Endothelial cell of umbilical vein (primary cell): ENCODE measurements at regions of chr9 and their contacts with region 1.

Region 1: GRCh38 chr9:125407974-125408900 is 146.6 kb downstream of the GAPVD1 start:
- DNase-seq: peak; percentile 61
- H3K4me3 ChIP-seq: peak overlapping the region; percentile 39 to 62 (median 40)
- H3K27ac ChIP-seq: peak overlapping the region; percentile 66
- H3K4me1 ChIP-seq: peaks cover 3% of the 10 kb centered on the region
- H3K27me3 ChIP-seq: no peaks in the 10 kb centered on the region
- CTCF ChIP-seq: peak; percentile 82 to 93
- POLR2A ChIP-seq: no peak

Region 2: GRCh38 chr9:124593651-124594058 is 814.6 kb before region 1 on chr9:
- CTCF ChIA-PET with region 1: no interaction called
- POLR2A ChIA-PET with region 1: no interaction called
- dilution Hi-C with region 1: no loop called
- intact Hi-C with region 1: no loop called
- DNase-seq: no peak
- H3K4me3 ChIP-seq: no peak overlapping the region
- H3K27ac ChIP-seq: no peak overlapping the region
- H3K4me1 ChIP-seq: no peaks in the 10 kb centered on the region
- H3K27me3 ChIP-seq: peaks cover 32% of the 10 kb centered on the region in 2 experiments
- CTCF ChIP-seq: no peak
- POLR2A ChIP-seq: no peak

Region 3: GRCh38 chr9:125549891-125550885 is 142.0 kb after region 1 on chr9:
- CTCF ChIA-PET with region 1: interaction called, 18 read pairs
- POLR2A ChIA-PET with region 1: no interaction called
- dilution Hi-C with region 1: no loop called
- intact Hi-C with region 1: no loop called
- DNase-seq: peak; percentile 80
- H3K4me3 ChIP-seq: peak overlapping the region in 1 of 3 experiments; percentile 19
- H3K27ac ChIP-seq: peak overlapping the region; percentile 72
- H3K4me1 ChIP-seq: peaks cover 43% of the 10 kb centered on the region
- H3K27me3 ChIP-seq: no peaks in the 10 kb centered on the region
- CTCF ChIP-seq: no peak
- POLR2A ChIP-seq: no peak

Region 4: GRCh38 chr9:125631391-125632085 is 223.3 kb after region 1 on chr9:
- CTCF ChIA-PET with region 1: interaction called, 11 read pairs
- POLR2A ChIA-PET with region 1: no interaction called
- dilution Hi-C with region 1: no loop called
- intact Hi-C with region 1: loop called (anchors 1 kb)
- DNase-seq: peak; percentile 73
- H3K4me3 ChIP-seq: no peak overlapping the region
- H3K27ac ChIP-seq: peak overlapping the region; percentile 32
- H3K4me1 ChIP-seq: peaks cover 29% of the 10 kb centered on the region
- H3K27me3 ChIP-seq: no peaks in the 10 kb centered on the region
- CTCF ChIP-seq: peak; percentile 62 to 65
- POLR2A ChIP-seq: no peak

Region 5: DNA sequence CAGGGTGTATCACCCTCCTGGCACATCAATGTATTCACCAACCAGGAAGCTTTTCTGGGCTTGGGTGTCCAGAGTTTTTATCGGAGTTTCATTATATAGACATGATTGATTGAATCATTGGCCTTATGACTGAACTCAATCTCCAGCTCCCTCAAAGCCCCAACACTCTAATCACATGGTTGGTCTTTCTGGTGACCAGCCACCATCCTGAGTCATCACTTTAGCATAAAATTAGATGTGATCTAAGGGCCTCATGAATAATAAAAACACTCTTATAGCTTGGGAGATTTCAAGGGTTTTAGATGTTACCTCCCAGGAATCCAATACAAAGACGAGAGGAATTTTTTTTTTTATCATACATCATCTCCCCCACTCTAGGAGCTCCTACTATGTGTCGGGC is 331.2 kb after region 1 on chr9:
- CTCF ChIA-PET with region 1: no interaction called
- POLR2A ChIA-PET with region 1: no interaction called
- dilution Hi-C with region 1: no loop called
- intact Hi-C with region 1: no loop called
- DNase-seq: no peak
- H3K4me3 ChIP-seq: no peak overlapping the region
- H3K27ac ChIP-seq: no peak overlapping the region
- H3K4me1 ChIP-seq: no peaks in the 10 kb centered on the region
- H3K27me3 ChIP-seq: peaks cover 3 to 5% of the 10 kb centered on the region in 2 experiments
- CTCF ChIP-seq: no peak
- POLR2A ChIP-seq: no peak

Region 6: DNA sequence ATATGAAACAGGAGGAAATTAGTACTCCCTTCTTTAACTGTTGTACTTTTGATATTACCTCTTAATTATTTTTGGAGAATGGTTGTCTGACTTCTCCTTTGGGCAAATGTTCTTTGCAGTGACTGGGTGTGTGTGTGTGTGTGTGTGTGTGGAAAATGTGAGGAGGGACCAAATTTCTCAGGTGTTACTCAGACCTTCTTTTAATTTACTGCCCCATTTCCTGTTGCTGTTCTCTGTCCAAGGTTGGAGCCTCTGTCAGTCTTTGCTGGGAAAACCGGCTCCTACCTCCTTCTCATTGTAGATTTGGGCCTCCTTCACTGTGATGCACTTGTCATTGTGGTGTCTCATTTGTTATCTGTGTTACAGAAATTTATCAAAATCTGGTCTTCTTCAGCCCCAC is 407.3 kb after region 1 on chr9:
- CTCF ChIA-PET with region 1: no interaction called
- POLR2A ChIA-PET with region 1: no interaction called
- dilution Hi-C with region 1: no loop called
- intact Hi-C with region 1: loop called (anchors 1 kb)
- DNase-seq: no peak
- H3K4me3 ChIP-seq: no peak overlapping the region
- H3K27ac ChIP-seq: no peak overlapping the region
- H3K4me1 ChIP-seq: peaks cover 8% of the 10 kb centered on the region
- H3K27me3 ChIP-seq: no peaks in the 10 kb centered on the region
- CTCF ChIP-seq: no peak
- POLR2A ChIP-seq: no peak

Region 7: GRCh38 chr9:126228781-126229444 is 820.7 kb after region 1 on chr9:
- CTCF ChIA-PET with region 1: interaction called, 35 read pairs
- POLR2A ChIA-PET with region 1: no interaction called
- dilution Hi-C with region 1: no loop called
- intact Hi-C with region 1: loop called (anchors 1 kb)
- DNase-seq: peak; percentile 60
- H3K4me3 ChIP-seq: no peak overlapping the region
- H3K27ac ChIP-seq: no peak overlapping the region
- H3K4me1 ChIP-seq: no peaks in the 10 kb centered on the region
- H3K27me3 ChIP-seq: peaks cover 2 to 5% of the 10 kb centered on the region in 2 experiments
- CTCF ChIP-seq: peak; percentile 83 to 95
- POLR2A ChIP-seq: no peak

Region 8: DNA sequence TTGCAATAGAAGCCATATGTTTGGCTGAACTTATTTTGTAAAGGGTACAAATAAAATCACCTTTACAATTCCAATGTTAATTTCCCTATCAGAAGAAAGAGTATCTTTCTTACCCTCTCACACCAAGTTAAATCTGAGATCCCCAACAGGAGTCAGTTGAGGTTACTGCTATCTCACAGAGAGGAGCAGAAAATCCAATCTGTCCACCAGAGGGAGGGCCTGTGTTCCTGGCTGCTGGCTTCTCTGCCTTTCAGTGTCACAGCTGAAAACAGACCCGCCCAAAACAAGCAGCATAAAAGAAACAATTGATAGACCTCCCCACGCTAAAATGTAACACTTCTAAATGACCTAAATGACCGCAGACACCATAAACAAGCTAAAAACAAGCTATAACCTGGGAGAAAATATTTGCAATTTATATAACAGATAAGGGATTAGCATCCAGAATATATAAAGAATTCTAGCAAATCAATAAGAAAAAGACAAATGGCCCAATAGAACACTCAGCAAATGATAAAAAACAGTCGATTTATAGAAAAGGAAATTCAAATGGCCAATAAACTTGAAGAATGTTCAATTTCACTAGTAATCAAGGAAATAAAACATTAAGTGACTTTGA is 893.9 kb after region 1 on chr9:
- CTCF ChIA-PET with region 1: interaction called, 6 read pairs
- POLR2A ChIA-PET with region 1: no interaction called
- dilution Hi-C with region 1: no loop called
- intact Hi-C with region 1: loop called (anchors 1 kb)
- DNase-seq: peak; percentile 68
- H3K4me3 ChIP-seq: no peak overlapping the region
- H3K27ac ChIP-seq: no peak overlapping the region
- H3K4me1 ChIP-seq: no peaks in the 10 kb centered on the region
- H3K27me3 ChIP-seq: peaks cover 0 to 4% of the 10 kb centered on the region in 2 experiments
- CTCF ChIP-seq: peak; percentile 68 to 79
- POLR2A ChIP-seq: no peak

Region 9: GRCh38 chr9:126490871-126491567 is 1082.8 kb after region 1 on chr9:
- CTCF ChIA-PET with region 1: interaction called, 18 read pairs
- POLR2A ChIA-PET with region 1: interaction called, 3 read pairs
- dilution Hi-C with region 1: no loop called
- intact Hi-C with region 1: loop called (anchors 5 kb)
- DNase-seq: peak; percentile 65
- H3K4me3 ChIP-seq: no peak overlapping the region
- H3K27ac ChIP-seq: no peak overlapping the region
- H3K4me1 ChIP-seq: no peaks in the 10 kb centered on the region
- H3K27me3 ChIP-seq: no peaks in the 10 kb centered on the region
- CTCF ChIP-seq: peak; percentile 70 to 79
- POLR2A ChIP-seq: no peak